ENCODE measurements at regions of chr11 and their contacts with region 1.

Region 1: DNA sequence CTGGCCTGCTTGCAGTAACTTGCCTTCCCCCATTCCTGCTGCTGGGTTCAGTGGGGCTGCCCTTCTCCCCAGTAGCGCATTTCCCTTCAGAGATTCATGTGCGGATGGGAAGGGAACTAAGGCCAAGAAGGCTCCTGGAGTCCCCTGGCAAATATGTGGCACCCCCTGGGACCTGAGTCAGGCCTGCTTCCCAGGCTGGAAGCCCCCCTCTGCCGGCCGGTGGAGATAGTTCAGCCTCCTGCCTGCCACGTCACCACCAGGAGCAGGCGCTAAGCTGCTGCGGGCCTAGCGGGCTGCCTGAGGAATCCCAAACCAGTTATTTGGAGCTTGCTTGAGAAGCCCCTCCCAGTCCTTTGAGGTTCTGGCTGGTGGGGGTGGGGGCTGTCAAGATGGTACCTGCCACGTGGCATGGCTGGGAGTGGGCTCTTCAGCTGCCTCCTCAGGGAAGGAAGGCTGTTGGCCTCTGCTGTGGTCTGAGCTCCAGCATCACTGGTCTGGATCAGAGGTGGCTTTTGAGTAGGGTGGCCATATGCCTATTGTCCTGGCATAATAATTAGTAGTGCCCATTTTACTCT is 2.0 kb downstream of the SERPINH1 start:
- DNase-seq: no peak

Region 2: GRCh38 chr11:75582895-75583717 is 19.0 kb after region 1 on chr11:
- intact Hi-C with region 1: loop called (anchors 2 kb)
- DNase-seq: no peak